ENCODE measurements at regions of chr13 and their contacts with region 1.

Region 1: DNA sequence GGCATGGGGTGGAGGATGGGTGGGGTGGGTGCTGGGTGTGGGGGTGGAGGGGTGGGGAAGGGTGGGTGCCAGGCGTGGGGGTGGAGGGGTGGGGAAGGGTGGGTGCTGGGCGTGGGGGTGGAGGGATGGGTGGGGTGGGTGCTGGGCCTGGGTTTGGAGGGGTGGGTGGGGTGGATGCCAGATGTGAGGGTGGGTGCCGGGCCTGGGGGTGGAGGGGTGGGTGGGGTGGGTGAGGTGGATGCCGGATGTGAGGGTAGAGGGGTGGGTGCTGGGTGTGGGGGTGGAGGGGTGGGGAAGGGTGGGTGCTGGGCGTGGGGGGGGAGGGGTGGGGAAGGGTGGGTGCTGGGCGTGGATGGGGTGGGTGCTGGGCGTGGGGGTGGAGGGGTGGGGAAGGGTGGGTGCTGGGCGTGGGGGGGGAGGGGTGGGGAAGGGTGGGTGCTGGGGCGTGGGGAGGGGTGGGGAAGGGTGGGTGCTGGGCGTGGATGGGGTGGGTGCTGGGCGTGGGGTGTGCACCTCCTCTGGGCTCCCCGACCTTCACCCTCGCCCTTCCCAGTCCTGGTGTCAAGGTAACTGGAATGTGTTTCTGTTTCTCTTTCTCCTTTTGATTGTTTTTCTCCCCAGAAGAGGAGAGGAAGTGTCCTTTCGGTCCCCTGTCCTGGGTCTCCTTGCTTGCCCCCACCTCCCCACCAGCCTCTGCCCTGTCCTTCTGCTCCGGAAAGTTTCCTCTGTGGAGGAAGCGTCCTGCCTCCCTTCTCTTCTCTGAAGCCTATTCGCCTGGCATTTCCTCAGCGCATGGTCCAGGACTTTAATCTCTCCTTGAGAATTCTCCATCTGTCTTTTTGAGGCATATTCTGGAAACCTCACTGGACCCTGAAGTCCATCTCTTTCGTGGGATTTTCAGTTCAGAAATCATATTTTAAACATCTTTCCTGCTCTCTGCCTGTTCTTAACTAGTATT is 22.9 kb upstream of the CFAP97D2 start:
- DNase-seq: peak in 4 of 9 experiments; percentile 16 to 73 (median 40)
- ATAC-seq: peak; percentile 37
- H3K4me3 ChIP-seq: peak overlapping the region in 1 of 2 experiments; percentile 29
- H3K4me3 Mint-ChIP-seq: peak overlapping the region; percentile 77
- H3K27ac ChIP-seq: peak overlapping the region; percentile 56 to 65
- H3K27ac Mint-ChIP-seq: peak overlapping the region; percentile 98
- H3K4me1 ChIP-seq: peaks cover 70% of the 10 kb centered on the region
- H3K4me1 Mint-ChIP-seq: peaks cover 79% of the 10 kb centered on the region
- H3K27me3 ChIP-seq: no peaks in the 10 kb centered on the region
- H3K27me3 Mint-ChIP-seq: no peaks in the 10 kb centered on the region
- CTCF ChIP-seq: no peak

Region 2: GRCh38 chr13:114043421-114044053 is 112.7 kb before region 1 on chr13:
- CTCF ChIA-PET with region 1: no interaction called
- POLR2A ChIA-PET with region 1: no interaction called
- intact Hi-C with region 1: no loop called
- DNase-seq: peak in 3 of 9 experiments; percentile 28 to 53 (median 43)
- ATAC-seq: peak; percentile 44
- H3K4me3 ChIP-seq: no peak overlapping the region
- H3K4me3 Mint-ChIP-seq: no peak overlapping the region
- H3K27ac ChIP-seq: no peak overlapping the region
- H3K27ac Mint-ChIP-seq: peak overlapping the region; percentile 80
- H3K4me1 ChIP-seq: peaks cover 45% of the 10 kb centered on the region
- H3K4me1 Mint-ChIP-seq: peaks cover 53% of the 10 kb centered on the region
- H3K27me3 ChIP-seq: no peaks in the 10 kb centered on the region
- H3K27me3 Mint-ChIP-seq: no peaks in the 10 kb centered on the region
- CTCF ChIP-seq: no peak

Region 3: GRCh38 chr13:114124921-114125320 is 31.3 kb before region 1 on chr13:
- CTCF ChIA-PET with region 1: no interaction called
- POLR2A ChIA-PET with region 1: no interaction called
- intact Hi-C with region 1: loop called in 1 of 2 experiments (anchors 5 kb)
- DNase-seq: peak in 8 of 9 experiments; percentile 44 to 92 (median 74)
- ATAC-seq: peak; percentile 61
- H3K4me3 ChIP-seq: peak overlapping the region in 1 of 2 experiments; percentile 25
- H3K4me3 Mint-ChIP-seq: peak overlapping the region; percentile 66
- H3K27ac ChIP-seq: peak overlapping the region; percentile 32 to 62
- H3K27ac Mint-ChIP-seq: peak overlapping the region; percentile 92
- H3K4me1 ChIP-seq: peaks cover 93% of the 10 kb centered on the region
- H3K4me1 Mint-ChIP-seq: peaks cover 86% of the 10 kb centered on the region
- H3K27me3 ChIP-seq: no peaks in the 10 kb centered on the region
- H3K27me3 Mint-ChIP-seq: no peaks in the 10 kb centered on the region
- CTCF ChIP-seq: no peak

Region 4: DNA sequence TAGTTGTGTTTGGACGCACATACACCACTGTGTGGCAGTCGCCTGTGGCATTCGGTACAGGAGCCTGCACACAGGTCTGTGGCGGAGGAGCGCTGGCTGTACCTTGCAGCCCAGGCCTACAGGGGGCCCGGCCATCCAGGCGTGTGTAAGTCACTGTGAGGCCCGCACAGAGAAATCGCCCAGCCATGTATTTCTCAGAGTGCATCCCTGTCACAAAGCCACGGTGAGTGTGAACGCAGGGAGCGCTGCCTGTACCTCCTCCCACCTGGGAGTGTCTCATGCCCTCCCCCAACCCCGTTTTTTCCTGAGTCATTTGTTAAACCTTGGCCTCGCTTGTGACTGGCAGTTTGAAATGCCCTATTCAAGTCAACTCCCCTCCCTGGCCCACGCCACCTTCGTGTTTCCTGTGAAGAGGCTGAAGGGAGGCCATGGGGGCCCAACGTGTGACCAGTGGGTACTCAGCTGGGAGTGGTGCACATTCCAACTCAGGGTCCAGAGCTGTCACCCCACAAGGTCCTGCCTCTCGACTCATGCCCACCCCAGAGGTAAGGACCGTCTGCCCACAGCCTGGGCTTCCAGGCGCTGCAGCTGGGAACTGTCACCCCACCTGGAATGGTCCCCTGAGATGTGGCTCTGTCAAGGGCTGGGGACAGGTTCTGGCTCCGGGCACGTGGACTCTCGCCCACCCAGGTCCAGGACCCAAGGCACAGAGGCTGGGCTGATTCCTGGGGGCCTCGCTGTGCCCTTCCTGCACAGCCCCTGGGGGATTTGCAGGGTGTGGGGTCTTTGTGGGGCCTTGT is 12.2 kb before region 1 on chr13:
- CTCF ChIA-PET with region 1: interaction called, 9 read pairs
- POLR2A ChIA-PET with region 1: interaction called, 5 read pairs
- intact Hi-C with region 1: loop called in 1 of 2 experiments (anchors 2 kb)
- DNase-seq: peak in 7 of 9 experiments; percentile 46 to 81 (median 73)
- ATAC-seq: peak; percentile 15
- H3K4me3 ChIP-seq: peak overlapping the region in 1 of 2 experiments; percentile 23
- H3K4me3 Mint-ChIP-seq: no peak overlapping the region
- H3K27ac ChIP-seq: peak overlapping the region; percentile 80 to 86
- H3K27ac Mint-ChIP-seq: no peak overlapping the region
- H3K4me1 ChIP-seq: peaks cover 85% of the 10 kb centered on the region
- H3K4me1 Mint-ChIP-seq: peaks cover 12% of the 10 kb centered on the region
- H3K27me3 ChIP-seq: no peaks in the 10 kb centered on the region
- H3K27me3 Mint-ChIP-seq: no peaks in the 10 kb centered on the region
- CTCF ChIP-seq: peak; percentile 30

Measured in CD8-positive, alpha-beta T cell (primary cell).